ENCODE measurements at regions of chr13 and their contacts with region 1.

Region 1: DNA sequence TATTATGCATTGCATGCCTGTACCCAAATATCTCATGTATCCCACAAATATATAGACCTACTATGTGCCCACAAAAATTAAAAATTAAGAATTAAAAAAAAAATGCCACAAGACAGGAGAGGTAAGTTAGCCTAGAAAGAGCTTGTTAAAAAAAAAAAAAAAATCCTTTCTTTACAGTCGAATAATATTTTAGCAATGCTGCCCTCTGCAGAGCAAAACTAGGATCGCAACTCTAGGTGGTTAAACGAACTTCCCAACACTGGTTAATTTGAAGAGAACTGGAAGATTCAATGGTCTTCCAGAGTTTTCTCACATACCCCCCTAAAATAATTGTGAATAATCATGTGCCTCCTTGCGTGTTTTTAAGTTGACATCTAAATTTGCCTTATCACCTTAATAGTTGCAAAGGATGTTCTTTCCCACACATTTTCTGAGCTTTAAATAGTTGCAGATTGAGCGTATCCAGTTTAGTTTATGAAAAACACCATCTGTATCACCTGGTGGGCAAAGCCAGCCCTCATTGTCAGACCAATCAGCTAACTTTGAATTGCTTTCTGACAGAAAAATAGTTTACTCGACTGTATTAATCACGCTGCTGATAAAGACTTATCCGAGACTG is 47.4 kb upstream of the RCBTB2 start:
- DNase-seq: peak; percentile 45
- H3K4me3 ChIP-seq: peak overlapping the region in 1 of 2 experiments; percentile 24; a peak in 1 of 4 replicates
- H3K27ac ChIP-seq: no peak overlapping the region
- H3K4me1 ChIP-seq: no peaks in the 10 kb centered on the region; a peak in 1 of 4 replicates
- H3K27me3 ChIP-seq: no peaks in the 10 kb centered on the region
- CTCF ChIP-seq: peak; percentile 87
- EP300 ChIP-seq: no peak
- RAD21 ChIP-seq: peak; percentile 87

Region 2: GRCh38 chr13:48126944-48127830 is 453.1 kb before region 1 on chr13:
- CTCF ChIA-PET with region 1: interaction called, 40 read pairs
- POLR2A ChIA-PET with region 1: no interaction called
- DNase-seq: peak; percentile 67
- H3K4me3 ChIP-seq: no peak overlapping the region
- H3K27ac ChIP-seq: peak overlapping the region in 1 of 2 experiments; percentile 23; a peak in 1 of 4 replicates
- H3K4me1 ChIP-seq: no peaks in the 10 kb centered on the region; a peak in 1 of 4 replicates
- H3K27me3 ChIP-seq: no peaks in the 10 kb centered on the region
- CTCF ChIP-seq: peak; percentile 82
- EP300 ChIP-seq: no peak
- RAD21 ChIP-seq: peak; percentile 76

Region 3: DNA sequence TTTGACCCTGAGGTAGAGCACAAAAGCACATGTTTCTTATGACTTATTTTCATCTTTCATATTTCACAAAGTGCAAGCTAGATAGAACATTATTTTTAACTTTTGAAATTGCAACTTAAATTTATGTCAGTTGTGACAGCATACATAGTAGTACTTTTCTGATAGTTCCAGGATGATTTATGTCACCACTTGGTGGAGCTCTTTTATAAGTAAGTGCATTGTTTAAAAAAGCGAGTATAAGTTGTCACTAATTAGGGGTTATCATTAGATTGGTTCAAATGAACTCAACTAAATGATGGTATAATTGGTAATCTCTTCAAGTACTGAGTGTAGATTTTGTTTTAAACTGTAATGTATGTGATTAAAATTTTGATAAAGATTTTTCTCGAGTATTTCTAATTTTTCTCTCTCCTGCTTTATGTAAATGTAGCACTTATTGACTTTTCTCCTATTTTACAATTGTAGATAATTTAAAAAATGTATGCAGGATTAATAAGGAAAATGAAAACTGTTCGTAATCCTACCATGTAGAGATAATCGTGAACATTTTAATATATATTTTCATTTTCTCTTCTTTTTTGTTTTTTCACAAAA is 245.7 kb before region 1 on chr13:
- CTCF ChIA-PET with region 1: interaction called, 26 read pairs
- POLR2A ChIA-PET with region 1: no interaction called
- DNase-seq: peak; percentile 15
- H3K4me3 ChIP-seq: no peak overlapping the region
- H3K27ac ChIP-seq: no peak overlapping the region
- H3K4me1 ChIP-seq: no peaks in the 10 kb centered on the region; a peak in 1 of 4 replicates
- H3K27me3 ChIP-seq: no peaks in the 10 kb centered on the region
- CTCF ChIP-seq: peak; percentile 71
- EP300 ChIP-seq: no peak
- RAD21 ChIP-seq: peak; percentile 69

Region 4: GRCh38 chr13:48562296-48563066 is 17.8 kb before region 1 on chr13:
- CTCF ChIA-PET with region 1: interaction called, 13 read pairs
- POLR2A ChIA-PET with region 1: no interaction called
- DNase-seq: no peak
- H3K4me3 ChIP-seq: no peak overlapping the region
- H3K27ac ChIP-seq: no peak overlapping the region
- H3K4me1 ChIP-seq: peaks cover 0 to 6% of the 10 kb centered on the region in 2 experiments; a peak in 2 of 4 replicates
- H3K27me3 ChIP-seq: no peaks in the 10 kb centered on the region
- CTCF ChIP-seq: no peak
- EP300 ChIP-seq: no peak
- RAD21 ChIP-seq: no peak

Region 5: GRCh38 chr13:48595431-48596429 is 15.4 kb after region 1 on chr13:
- CTCF ChIA-PET with region 1: interaction called, 17 read pairs
- POLR2A ChIA-PET with region 1: no interaction called
- DNase-seq: peak; percentile 48
- H3K4me3 ChIP-seq: no peak overlapping the region
- H3K27ac ChIP-seq: no peak overlapping the region
- H3K4me1 ChIP-seq: no peaks in the 10 kb centered on the region
- H3K27me3 ChIP-seq: no peaks in the 10 kb centered on the region
- CTCF ChIP-seq: peak; percentile 80
- EP300 ChIP-seq: no peak
- RAD21 ChIP-seq: peak; percentile 91

Region 6: GRCh38 chr13:48686811-48687210 is 106.5 kb after region 1 on chr13:
- CTCF ChIA-PET with region 1: no interaction called
- POLR2A ChIA-PET with region 1: no interaction called
- DNase-seq: no peak
- H3K4me3 ChIP-seq: no peak overlapping the region
- H3K27ac ChIP-seq: no peak overlapping the region
- H3K4me1 ChIP-seq: no peaks in the 10 kb centered on the region
- H3K27me3 ChIP-seq: no peaks in the 10 kb centered on the region
- CTCF ChIP-seq: no peak
- EP300 ChIP-seq: no peak
- RAD21 ChIP-seq: no peak

Measured in SK-N-SH (cell line).